ENCODE measurements at regions of chr10 and their contacts with region 1.

Region 1: GRCh38 chr10:60212195-60212594 is 177.5 kb downstream of the ANK3 start:
- DNase-seq: no peak
- ATAC-seq: no peak
- H3K4me3 ChIP-seq: no peak overlapping the region
- H3K4me3 Mint-ChIP-seq: no peak overlapping the region
- H3K27ac ChIP-seq: no peak overlapping the region
- H3K27ac Mint-ChIP-seq: no peak overlapping the region
- H3K4me1 ChIP-seq: peaks cover 0 to 4% of the 10 kb centered on the region in 2 experiments
- H3K4me1 Mint-ChIP-seq: peaks cover 42 to 47% (median 46%) of the 10 kb centered on the region in 3 donors
- H3K27me3 ChIP-seq: no peaks in the 10 kb centered on the region
- H3K27me3 Mint-ChIP-seq: no peaks in the 10 kb centered on the region

Region 2: GRCh38 chr10:60186315-60187071 is 25.7 kb before region 1 on chr10:
- CTCF ChIA-PET with region 1: no interaction called
- POLR2A ChIA-PET with region 1: no interaction called
- DNase-seq: no peak
- ATAC-seq: no peak
- H3K4me3 ChIP-seq: no peak overlapping the region
- H3K4me3 Mint-ChIP-seq: no peak overlapping the region
- H3K27ac ChIP-seq: no peak overlapping the region
- H3K27ac Mint-ChIP-seq: no peak overlapping the region
- H3K4me1 ChIP-seq: no peaks in the 10 kb centered on the region
- H3K4me1 Mint-ChIP-seq: peaks cover 0 to 1% (median 0%) of the 10 kb centered on the region in 3 donors
- H3K27me3 ChIP-seq: no peaks in the 10 kb centered on the region
- H3K27me3 Mint-ChIP-seq: no peaks in the 10 kb centered on the region

Region 3: GRCh38 chr10:60466267-60467201 is 254.3 kb after region 1 on chr10:
- CTCF ChIA-PET with region 1: no interaction called
- POLR2A ChIA-PET with region 1: interaction called in 1 of 2 experiments, 13 read pairs
- DNase-seq: no peak
- ATAC-seq: no peak
- H3K4me3 ChIP-seq: no peak overlapping the region
- H3K4me3 Mint-ChIP-seq: no peak overlapping the region
- H3K27ac ChIP-seq: no peak overlapping the region
- H3K27ac Mint-ChIP-seq: no peak overlapping the region
- H3K4me1 ChIP-seq: no peaks in the 10 kb centered on the region
- H3K4me1 Mint-ChIP-seq: peaks cover 3 to 13% (median 4%) of the 10 kb centered on the region in 3 donors
- H3K27me3 ChIP-seq: no peaks in the 10 kb centered on the region
- H3K27me3 Mint-ChIP-seq: no peaks in the 10 kb centered on the region

Measured in T-cell (primary cell).